ENCODE measurements at regions of chr5 and their contacts with region 1.

Region 1: GRCh38 chr5:163505368-163506094 is at the start of gene MAT2B:
- DNase-seq: peak; percentile 93 to 97 (median 95)
- ATAC-seq: peak; percentile 95
- H3K4me3 ChIP-seq: peak within 1 kb of the TSS; percentile 85
- H3K4me3 Mint-ChIP-seq: peak within 1 kb of the TSS; percentile 84 to 99 (median 98)
- H3K27ac ChIP-seq: peak within 1 kb of the TSS; percentile 93
- H3K27ac Mint-ChIP-seq: peak within 1 kb of the TSS; percentile 97 to 100 (median 99)
- H3K4me1 ChIP-seq: peaks cover 31 to 37% of the 10 kb centered on the region in 2 donors
- H3K4me1 Mint-ChIP-seq: peaks cover 29 to 57% (median 48%) of the 10 kb centered on the region in 7 donors
- H3K27me3 ChIP-seq: no peaks in the 10 kb centered on the region
- H3K27me3 Mint-ChIP-seq: peaks cover 0 to 6% (median 0%) of the 10 kb centered on the region in 5 donors
- total RNA-seq, gene MAT2B: 47.7 to 127 (median 112) TPM

Region 2: GRCh38 chr5:163437309-163438182 is 68.0 kb before region 1 on chr5 and contains the start of gene CCNG1:
- CTCF ChIA-PET with region 1: interaction called, 4 read pairs
- POLR2A ChIA-PET with region 1: interaction called, 14 read pairs
- intact Hi-C with region 1: loop called (anchors 1 kb)
- DNase-seq: peak; percentile 68 to 87 (median 84)
- ATAC-seq: peak; percentile 98
- H3K4me3 ChIP-seq: peak within 1 kb of the TSS; percentile 84
- H3K4me3 Mint-ChIP-seq: peak within 1 kb of the TSS; percentile 86 to 97 (median 95)
- H3K27ac ChIP-seq: peak within 1 kb of the TSS; percentile 96
- H3K27ac Mint-ChIP-seq: peak within 1 kb of the TSS; percentile 79 to 99 (median 93)
- H3K4me1 ChIP-seq: peaks cover 24 to 28% of the 10 kb centered on the region in 2 donors
- H3K4me1 Mint-ChIP-seq: peaks cover 20 to 55% (median 51%) of the 10 kb centered on the region in 7 donors
- H3K27me3 ChIP-seq: peaks cover 0 to 5% of the 10 kb centered on the region in 2 donors
- H3K27me3 Mint-ChIP-seq: peaks cover 0 to 13% (median 4%) of the 10 kb centered on the region in 5 donors
- total RNA-seq, gene CCNG1: 86.0 to 150 (median 116) TPM

Region 3: DNA sequence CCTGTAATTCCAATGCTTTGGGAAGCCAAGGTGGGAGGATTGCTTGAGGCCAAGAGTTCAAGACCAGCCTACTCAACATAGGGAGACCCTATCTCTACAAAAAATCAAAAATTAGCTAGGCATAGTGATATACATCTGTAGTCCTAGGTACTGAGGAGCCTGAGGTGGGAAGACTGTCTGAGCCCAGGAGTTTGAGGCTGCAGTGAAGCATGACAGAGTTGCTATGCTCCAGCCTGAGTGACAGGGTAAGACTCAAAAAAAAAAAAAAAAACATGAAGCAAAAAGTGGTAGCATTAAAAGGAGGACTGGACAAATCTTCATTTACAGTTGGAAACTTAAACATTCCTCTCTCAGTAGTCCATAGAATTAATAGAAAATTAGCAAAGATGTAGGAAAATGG is 58.3 kb before region 1 on chr5:
- CTCF ChIA-PET with region 1: interaction called, 4 read pairs
- POLR2A ChIA-PET with region 1: interaction called, 13 read pairs
- intact Hi-C with region 1: no loop called
- DNase-seq: no peak
- ATAC-seq: no peak
- H3K4me3 ChIP-seq: no peak overlapping the region
- H3K4me3 Mint-ChIP-seq: no peak overlapping the region
- H3K27ac ChIP-seq: no peak overlapping the region
- H3K27ac Mint-ChIP-seq: peak overlapping the region in 5 of 9 donors; percentile 3 to 62 (median 36)
- H3K4me1 ChIP-seq: no peaks in the 10 kb centered on the region
- H3K4me1 Mint-ChIP-seq: peaks cover 0 to 26% (median 22%) of the 10 kb centered on the region in 7 donors
- H3K27me3 ChIP-seq: no peaks in the 10 kb centered on the region
- H3K27me3 Mint-ChIP-seq: no peaks in the 10 kb centered on the region

Region 4: GRCh38 chr5:163459922-163460766 is 45.4 kb before region 1 on chr5 and contains the starts of genes HMMR and NUDCD2:
- CTCF ChIA-PET with region 1: interaction called, 18 read pairs
- POLR2A ChIA-PET with region 1: interaction called, 238 read pairs
- intact Hi-C with region 1: loop called (anchors 1 kb)
- DNase-seq: peak; percentile 94 to 99 (median 98)
- ATAC-seq: peak; percentile 89
- H3K4me3 ChIP-seq: peak within 1 kb of the TSS; percentile 91
- H3K4me3 Mint-ChIP-seq: peak within 1 kb of the TSS; percentile 90 to 99 (median 97)
- H3K27ac ChIP-seq: peak within 1 kb of the TSS; percentile 98
- H3K27ac Mint-ChIP-seq: peak within 1 kb of the TSS; percentile 99 to 100 (median 99)
- H3K4me1 ChIP-seq: peaks cover 8 to 23% of the 10 kb centered on the region in 2 donors
- H3K4me1 Mint-ChIP-seq: peaks cover 18 to 62% (median 52%) of the 10 kb centered on the region in 7 donors
- H3K27me3 ChIP-seq: no peaks in the 10 kb centered on the region
- H3K27me3 Mint-ChIP-seq: no peaks in the 10 kb centered on the region
- total RNA-seq, gene HMMR: 0.37 to 34.0 (median 0.55) TPM in 4 of 5 experiments, not detected in the other
- total RNA-seq, gene NUDCD2: 17.9 to 34.0 (median 27.1) TPM

Region 5: DNA sequence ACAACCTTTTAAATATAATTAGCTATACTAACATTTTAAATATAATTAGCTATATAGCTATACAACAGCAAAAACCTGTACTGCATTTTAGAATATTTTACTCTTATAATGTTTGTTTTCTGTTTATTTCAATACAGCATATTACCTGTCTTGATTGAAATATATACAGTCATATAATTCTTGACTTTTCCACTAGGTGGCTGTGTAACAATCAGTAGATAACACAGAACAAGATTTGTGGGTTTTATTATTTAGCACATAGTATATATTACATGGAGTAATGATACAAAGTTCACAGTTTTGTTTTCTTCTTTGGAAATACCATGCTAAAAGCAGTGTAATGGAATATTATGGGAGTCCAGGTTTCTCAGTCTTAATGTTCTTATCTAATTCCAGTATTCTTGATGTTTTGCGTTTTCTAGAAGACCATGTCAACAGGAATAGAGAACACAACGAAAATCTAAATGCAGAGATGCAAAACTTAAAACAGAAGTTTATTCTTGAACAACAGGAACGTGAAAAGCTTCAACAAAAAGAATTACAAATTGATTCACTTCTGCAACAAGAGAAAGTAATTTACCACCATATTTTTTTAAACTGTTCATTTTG is 31.8 kb before region 1 on chr5:
- CTCF ChIA-PET with region 1: interaction called, 20 read pairs
- POLR2A ChIA-PET with region 1: interaction called, 65 read pairs
- intact Hi-C with region 1: loop called (anchors 1 kb)
- DNase-seq: peak in 4 of 9 donors; percentile 12 to 48 (median 36)
- ATAC-seq: peak; percentile 84
- H3K4me3 ChIP-seq: no peak overlapping the region
- H3K4me3 Mint-ChIP-seq: no peak overlapping the region
- H3K27ac ChIP-seq: no peak overlapping the region
- H3K27ac Mint-ChIP-seq: no peak overlapping the region
- H3K4me1 ChIP-seq: no peaks in the 10 kb centered on the region
- H3K4me1 Mint-ChIP-seq: peaks cover 0 to 13% (median 0%) of the 10 kb centered on the region in 7 donors
- H3K27me3 ChIP-seq: no peaks in the 10 kb centered on the region
- H3K27me3 Mint-ChIP-seq: no peaks in the 10 kb centered on the region

Region 6: GRCh38 chr5:163489055-163489744 is 16.3 kb before region 1 on chr5:
- CTCF ChIA-PET with region 1: interaction called, 3 read pairs
- POLR2A ChIA-PET with region 1: interaction called, 5 read pairs
- intact Hi-C with region 1: loop called (anchors 1 kb)
- DNase-seq: peak in 3 of 9 donors; percentile 8 to 15 (median 12)
- ATAC-seq: peak; percentile 46
- H3K4me3 ChIP-seq: no peak overlapping the region
- H3K4me3 Mint-ChIP-seq: no peak overlapping the region
- H3K27ac ChIP-seq: no peak overlapping the region
- H3K27ac Mint-ChIP-seq: peak overlapping the region in 1 of 9 donors; percentile 27
- H3K4me1 ChIP-seq: no peaks in the 10 kb centered on the region
- H3K4me1 Mint-ChIP-seq: peaks cover 0 to 9% (median 0%) of the 10 kb centered on the region in 7 donors
- H3K27me3 ChIP-seq: no peaks in the 10 kb centered on the region
- H3K27me3 Mint-ChIP-seq: no peaks in the 10 kb centered on the region

Region 7: GRCh38 chr5:163564321-163564938 is 58.9 kb after region 1 on chr5:
- CTCF ChIA-PET with region 1: interaction called, 3 read pairs
- POLR2A ChIA-PET with region 1: interaction called, 4 read pairs
- intact Hi-C with region 1: loop called in 1 of 2 experiments (anchors 1 kb)
- DNase-seq: peak in 8 of 9 donors; percentile 16 to 62 (median 48)
- ATAC-seq: peak; percentile 63
- H3K4me3 ChIP-seq: no peak overlapping the region
- H3K4me3 Mint-ChIP-seq: peak overlapping the region in 2 of 10 donors; percentile 13 to 58
- H3K27ac ChIP-seq: no peak overlapping the region
- H3K27ac Mint-ChIP-seq: no peak overlapping the region
- H3K4me1 ChIP-seq: peaks cover 8 to 9% of the 10 kb centered on the region in 2 donors
- H3K4me1 Mint-ChIP-seq: peaks cover 13 to 33% (median 21%) of the 10 kb centered on the region in 7 donors
- H3K27me3 ChIP-seq: peaks cover 3 to 5% of the 10 kb centered on the region in 2 donors
- H3K27me3 Mint-ChIP-seq: peaks cover 49 to 68% (median 56%) of the 10 kb centered on the region in 5 donors